ENCODE measurements at regions of chr16 and their contacts with region 1.

Region 1: DNA sequence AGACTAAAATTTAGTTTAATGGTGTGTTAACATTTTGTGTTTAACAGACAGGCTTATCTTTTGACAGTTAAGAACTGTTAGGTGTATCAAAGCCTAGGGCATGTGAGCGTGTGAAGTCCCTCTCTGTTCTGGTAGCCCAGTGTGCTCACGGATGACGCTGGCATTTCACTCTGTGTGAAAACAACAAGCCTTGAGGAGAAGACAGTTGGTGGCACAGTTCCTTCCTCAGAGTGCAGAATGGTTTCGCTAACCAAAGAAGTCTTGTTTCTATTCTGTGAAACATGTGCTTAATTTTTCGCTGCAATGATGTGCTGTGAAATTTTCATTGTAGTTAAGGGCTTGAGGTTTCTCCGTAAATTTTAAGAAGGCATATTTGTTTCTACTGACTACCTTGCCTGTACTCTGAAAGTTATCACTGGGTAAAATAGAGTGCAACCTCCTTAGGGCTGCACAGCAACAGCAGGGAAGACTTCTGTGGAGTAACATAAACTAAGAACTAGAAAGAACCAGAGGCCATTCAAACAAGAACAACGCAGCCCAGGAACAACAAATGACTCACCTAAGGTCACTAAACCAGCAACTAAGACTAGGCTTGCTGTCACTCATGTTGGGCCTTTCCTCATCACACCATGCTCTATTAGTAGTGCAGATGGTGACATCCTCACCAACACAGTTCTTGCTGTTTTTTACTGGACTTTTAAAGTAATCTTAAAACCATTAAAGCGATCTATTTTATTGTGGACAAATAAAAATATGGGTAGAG is 33.4 kb downstream of the BRD7 start:
- DNase-seq: peak; percentile 73
- H3K4me3 Mint-ChIP-seq: peak overlapping the region; percentile 44
- H3K27ac Mint-ChIP-seq: peak overlapping the region; percentile 96
- H3K4me1 Mint-ChIP-seq: peaks cover 66% of the 10 kb centered on the region
- H3K27me3 Mint-ChIP-seq: no peaks in the 10 kb centered on the region

Region 2: GRCh38 chr16:48365581-48366164 is 1969.7 kb before region 1 on chr16:
- CTCF ChIA-PET with region 1: no interaction called
- intact Hi-C with region 1: loop called (anchors 10 kb)
- DNase-seq: peak; percentile 88
- H3K4me3 Mint-ChIP-seq: peak overlapping the region; percentile 99
- H3K27ac Mint-ChIP-seq: peak overlapping the region; percentile 100
- H3K4me1 Mint-ChIP-seq: peaks cover 65% of the 10 kb centered on the region
- H3K27me3 Mint-ChIP-seq: no peaks in the 10 kb centered on the region

Region 3: GRCh38 chr16:50102051-50102746 is 233.2 kb before region 1 on chr16:
- CTCF ChIA-PET with region 1: no interaction called
- intact Hi-C with region 1: loop called (anchors 1 kb)
- DNase-seq: peak; percentile 36
- H3K4me3 Mint-ChIP-seq: no peak overlapping the region
- H3K27ac Mint-ChIP-seq: peak overlapping the region; percentile 35
- H3K4me1 Mint-ChIP-seq: peaks cover 8% of the 10 kb centered on the region
- H3K27me3 Mint-ChIP-seq: no peaks in the 10 kb centered on the region

Region 4: DNA sequence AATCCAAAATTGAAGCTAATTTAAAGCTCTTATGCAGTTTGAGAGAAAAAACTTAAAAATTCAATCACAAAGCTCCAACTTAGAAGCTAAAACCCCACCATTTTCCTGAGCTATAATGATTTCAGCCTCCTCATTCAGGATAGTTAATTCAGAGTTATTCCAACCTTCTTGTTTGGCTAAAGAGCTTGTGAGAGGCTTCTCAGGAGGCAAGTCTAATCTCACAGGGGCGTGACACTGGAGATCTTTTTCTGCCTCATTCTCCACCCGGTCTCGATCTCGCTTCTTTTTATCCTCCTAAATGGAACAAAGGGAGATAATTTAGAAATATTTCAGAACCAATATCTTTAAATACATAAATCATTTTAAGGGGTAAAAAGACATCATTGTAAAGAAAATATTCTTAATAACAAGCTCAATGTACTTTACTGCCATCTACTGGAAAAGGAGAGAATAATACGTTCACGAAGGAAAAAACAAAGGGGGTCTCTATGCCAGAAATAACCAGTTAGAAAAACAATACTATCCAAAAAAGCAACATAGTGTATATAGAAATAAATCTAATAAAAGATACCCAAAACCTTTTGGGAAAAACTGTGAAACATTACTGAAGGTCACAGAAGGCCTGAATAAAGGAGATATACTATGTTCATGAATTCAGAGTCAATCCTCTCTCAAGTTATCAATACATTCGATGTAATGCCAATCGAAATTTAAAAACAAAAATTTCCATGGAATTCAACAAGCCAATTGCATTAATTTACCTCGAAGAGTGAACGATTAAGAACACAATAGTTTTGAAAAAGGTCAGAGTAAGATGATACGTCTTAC is 19.5 kb after region 1 on chr16:
- CTCF ChIA-PET with region 1: interaction called, 149 read pairs
- intact Hi-C with region 1: loop called (anchors 1 kb)
- DNase-seq: no peak
- H3K4me3 Mint-ChIP-seq: no peak overlapping the region
- H3K27ac Mint-ChIP-seq: no peak overlapping the region
- H3K4me1 Mint-ChIP-seq: peaks cover 25% of the 10 kb centered on the region
- H3K27me3 Mint-ChIP-seq: no peaks in the 10 kb centered on the region

Region 5: DNA sequence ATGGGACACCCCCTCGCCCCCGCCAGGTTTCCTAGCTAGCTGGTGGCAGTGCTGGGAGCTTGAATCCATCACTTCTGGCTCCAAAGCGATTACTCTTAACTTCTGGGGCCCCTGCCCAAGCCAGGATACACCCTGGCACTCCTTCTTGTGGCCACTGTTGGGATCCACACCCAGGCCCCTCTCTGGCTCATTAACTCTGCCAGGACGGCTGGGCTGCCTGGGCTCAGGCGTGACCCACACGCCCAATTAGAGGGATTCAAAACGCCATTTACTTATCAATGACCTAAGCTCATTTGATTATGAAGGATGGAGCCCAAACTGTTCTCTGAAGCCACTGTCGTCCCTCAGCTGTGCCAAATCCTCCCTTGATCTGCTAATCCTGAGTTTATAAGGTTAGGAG is 113.1 kb after region 1 on chr16:
- CTCF ChIA-PET with region 1: no interaction called
- intact Hi-C with region 1: no loop called
- DNase-seq: no peak
- H3K4me3 Mint-ChIP-seq: no peak overlapping the region
- H3K27ac Mint-ChIP-seq: no peak overlapping the region
- H3K4me1 Mint-ChIP-seq: peaks cover 5% of the 10 kb centered on the region
- H3K27me3 Mint-ChIP-seq: no peaks in the 10 kb centered on the region

Region 6: DNA sequence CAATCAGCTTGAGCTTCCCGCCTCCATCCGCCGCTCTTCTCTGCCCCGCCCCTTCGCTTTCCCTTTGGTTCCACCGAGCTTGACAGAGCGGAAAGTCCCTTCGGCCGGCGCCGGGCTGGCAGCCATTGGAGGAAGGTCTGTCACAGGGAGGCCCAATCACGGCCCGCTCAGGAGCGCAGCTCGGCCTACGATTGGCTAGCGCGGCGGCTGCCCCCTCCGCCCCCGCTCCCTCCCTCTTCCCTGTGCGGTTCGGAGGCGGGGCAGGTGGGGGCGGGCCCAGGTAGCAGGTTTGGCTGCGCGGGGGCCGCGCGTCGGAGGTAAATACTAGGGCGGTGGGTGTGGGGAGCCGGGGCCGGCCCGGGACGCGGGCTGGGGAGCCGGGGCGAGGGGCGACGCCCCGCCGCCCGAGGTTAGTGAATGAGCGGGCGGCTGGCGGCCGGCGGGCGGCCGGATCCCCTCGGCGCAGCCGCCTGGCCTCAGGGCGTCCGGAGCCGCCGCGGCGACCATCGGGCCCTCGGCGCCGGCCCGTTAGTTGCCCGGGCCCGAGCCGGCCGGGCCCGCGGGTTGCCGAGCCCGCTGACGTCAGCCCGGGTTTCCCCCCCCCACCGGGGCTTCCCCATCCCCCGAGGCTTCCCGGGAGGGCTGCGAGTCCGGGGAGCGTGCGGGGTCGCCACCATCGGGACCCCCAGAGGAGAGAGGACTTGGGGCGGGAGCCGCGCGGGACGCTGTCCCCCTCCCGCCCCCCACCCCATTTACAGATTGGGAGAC is 406.6 kb after region 1 on chr16 and contains the start of gene CYLD:
- CTCF ChIA-PET with region 1: no interaction called
- intact Hi-C with region 1: loop called (anchors 1 kb)
- DNase-seq: peak; percentile 100
- H3K4me3 Mint-ChIP-seq: peak within 1 kb of the TSS; percentile 90
- H3K27ac Mint-ChIP-seq: peak within 1 kb of the TSS; percentile 96
- H3K4me1 Mint-ChIP-seq: peaks cover 42% of the 10 kb centered on the region
- H3K27me3 Mint-ChIP-seq: no peaks in the 10 kb centered on the region
- total RNA-seq, gene CYLD: 70.8 to 71.9 TPM